A549 (cell line): ENCODE measurements at regions of chr11 and their contacts with region 1.

Region 1: GRCh38 chr11:84564180-84564866 is 1062.8 kb downstream of the DLG2 start:
- DNase-seq: peak; percentile 66 to 87
- ATAC-seq: peak; percentile 91 to 95
- H3K4me3 ChIP-seq: no peak overlapping the region
- H3K27ac ChIP-seq: peak overlapping the region; percentile 84 to 89
- H3K4me1 ChIP-seq: peaks cover 28% of the 10 kb centered on the region
- CTCF ChIP-seq: peak; percentile 87
- EP300 ChIP-seq: no peak
- POLR2A ChIP-seq: no peak
- RAD21 ChIP-seq: peak; percentile 67 to 69

Region 2: DNA sequence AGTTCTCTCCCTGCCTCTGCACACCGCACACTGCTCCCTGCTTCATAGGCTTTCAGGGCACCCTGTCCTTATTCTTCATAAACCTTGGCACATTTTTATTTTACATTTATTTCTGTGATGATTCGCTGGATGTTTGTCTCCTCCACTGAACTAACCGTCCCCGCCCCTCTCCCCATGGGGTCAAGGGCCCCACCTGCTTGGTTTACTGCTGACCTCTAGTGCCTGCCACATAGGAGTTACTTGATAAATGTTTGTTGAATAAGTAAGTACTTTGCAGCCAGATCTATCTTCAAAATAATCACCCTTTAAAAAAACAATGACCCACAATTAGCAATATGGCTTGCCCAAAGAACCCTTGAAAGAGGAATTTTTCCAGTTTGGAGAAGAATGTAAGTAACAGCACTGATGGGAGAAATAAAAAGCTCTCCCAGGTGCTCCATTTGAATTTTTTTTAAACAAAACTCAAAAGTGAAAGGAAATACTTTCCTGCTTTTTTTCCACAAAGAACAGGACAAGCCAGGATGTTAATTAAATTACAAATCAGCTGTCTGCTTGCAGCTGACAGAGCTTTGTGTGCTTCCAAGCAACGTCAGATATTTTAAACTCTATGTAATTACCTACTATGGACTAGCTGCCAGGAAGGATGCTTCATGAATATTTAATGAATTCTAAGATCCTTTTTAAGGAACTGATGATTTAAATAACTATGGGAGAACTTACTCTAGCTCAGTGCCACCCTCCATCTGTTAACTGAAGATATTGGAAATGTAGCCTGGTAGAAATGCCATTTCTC is 20.8 kb before region 1 on chr11:
- CTCF ChIA-PET with region 1: interaction called, 19 read pairs
- POLR2A ChIA-PET with region 1: no interaction called
- DNase-seq: no peak
- ATAC-seq: peak; percentile 33 to 39; a peak in 2 of 6 replicates
- H3K4me3 ChIP-seq: no peak overlapping the region
- H3K27ac ChIP-seq: no peak overlapping the region
- H3K4me1 ChIP-seq: no peaks in the 10 kb centered on the region
- CTCF ChIP-seq: no peak
- EP300 ChIP-seq: no peak
- POLR2A ChIP-seq: no peak
- RAD21 ChIP-seq: 0 out of 5 replicates have a peak, but pooled peaks of 1 of the 2 experiments have one; percentile 14

Region 3: DNA sequence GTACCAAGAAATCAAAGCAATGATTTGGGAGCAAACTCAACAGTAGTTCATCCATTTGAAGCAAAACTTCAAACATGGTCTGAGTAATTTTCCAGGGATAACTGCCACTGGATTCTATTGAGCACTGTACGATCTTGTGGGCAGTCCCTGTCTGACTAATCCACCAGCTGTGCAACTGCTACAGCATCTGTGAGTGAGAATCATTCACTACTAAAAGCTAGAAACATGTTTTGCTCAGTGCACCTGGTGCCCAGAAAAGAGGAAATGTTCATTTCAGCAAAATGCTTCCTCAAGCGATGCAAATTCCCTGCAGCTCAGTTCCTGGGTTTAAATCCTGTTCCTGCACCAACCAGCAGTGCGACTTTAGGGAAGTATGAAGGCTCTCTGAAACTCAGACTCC is 15.1 kb before region 1 on chr11:
- CTCF ChIA-PET with region 1: interaction called, 19 read pairs
- POLR2A ChIA-PET with region 1: no interaction called
- DNase-seq: no peak
- ATAC-seq: no peak
- H3K4me3 ChIP-seq: no peak overlapping the region
- H3K27ac ChIP-seq: no peak overlapping the region
- H3K4me1 ChIP-seq: no peaks in the 10 kb centered on the region
- CTCF ChIP-seq: no peak
- EP300 ChIP-seq: no peak
- POLR2A ChIP-seq: no peak
- RAD21 ChIP-seq: no peak